IMR-90 (cell line): ENCODE measurements at regions of chr1 and their contacts with region 1.

Region 1: GRCh38 chr1:218345673-218346390 is 696 bp downstream of the TGFB2 start:
- DNase-seq: peak; percentile 70
- ATAC-seq: peak; percentile 56
- H3K4me3 ChIP-seq: peak overlapping the region; percentile 81
- H3K27ac ChIP-seq: peak overlapping the region; percentile 76
- H3K4me1 ChIP-seq: peaks cover 4% of the 10 kb centered on the region
- H3K27me3 ChIP-seq: no peaks in the 10 kb centered on the region
- CTCF ChIP-seq: no peak
- POLR2A ChIP-seq: no peak
- RAD21 ChIP-seq: no peak

Region 2: GRCh38 chr1:218480137-218480536 is 134.3 kb after region 1 on chr1:
- CTCF ChIA-PET with region 1: no interaction called
- POLR2A ChIA-PET with region 1: interaction called, 4 read pairs
- dilution Hi-C with region 1: no loop called
- in situ Hi-C with region 1: no loop called
- intact Hi-C with region 1: loop called (anchors 1 kb)
- DNase-seq: peak; percentile 97
- ATAC-seq: peak; percentile 64
- H3K4me3 ChIP-seq: no peak overlapping the region
- H3K27ac ChIP-seq: peak overlapping the region; percentile 78
- H3K4me1 ChIP-seq: peaks cover 16% of the 10 kb centered on the region
- H3K27me3 ChIP-seq: no peaks in the 10 kb centered on the region
- CTCF ChIP-seq: no peak
- POLR2A ChIP-seq: peak; percentile 45; the same call in 1 of the 2 replicates
- RAD21 ChIP-seq: no peak

Region 3: GRCh38 chr1:218674280-218674773 is 328.5 kb after region 1 on chr1:
- CTCF ChIA-PET with region 1: no interaction called
- POLR2A ChIA-PET with region 1: no interaction called
- dilution Hi-C with region 1: no loop called
- in situ Hi-C with region 1: no loop called
- intact Hi-C with region 1: loop called (anchors 5 kb)
- DNase-seq: peak; percentile 83
- ATAC-seq: peak; percentile 92
- H3K4me3 ChIP-seq: no peak overlapping the region
- H3K27ac ChIP-seq: peak overlapping the region; percentile 65
- H3K4me1 ChIP-seq: peaks cover 4% of the 10 kb centered on the region
- H3K27me3 ChIP-seq: no peaks in the 10 kb centered on the region
- CTCF ChIP-seq: no peak
- POLR2A ChIP-seq: no peak
- RAD21 ChIP-seq: no peak; the same call in 1 of the 2 replicates

Region 4: DNA sequence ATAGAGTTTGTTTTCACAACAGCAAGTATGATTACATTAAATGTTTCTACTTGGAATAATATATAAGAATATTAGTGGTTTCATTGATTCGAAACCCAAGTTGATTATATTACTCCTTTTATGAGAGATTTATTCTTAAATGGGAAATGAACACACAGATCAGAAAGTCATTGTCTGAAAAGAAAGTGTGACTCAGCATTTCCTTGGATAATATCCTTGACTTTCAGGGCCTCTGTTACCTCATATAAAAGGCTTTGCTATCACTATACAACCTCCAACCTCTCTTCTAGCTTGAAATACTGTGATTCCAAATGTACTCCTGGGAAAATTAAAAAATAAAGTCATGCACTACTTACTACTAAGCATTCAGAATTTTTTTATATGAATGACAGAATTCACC is 532.5 kb after region 1 on chr1:
- CTCF ChIA-PET with region 1: no interaction called
- POLR2A ChIA-PET with region 1: no interaction called
- dilution Hi-C with region 1: no loop called
- in situ Hi-C with region 1: no loop called
- intact Hi-C with region 1: loop called (anchors 5 kb)
- DNase-seq: peak; percentile 68
- ATAC-seq: peak; percentile 42
- H3K4me3 ChIP-seq: no peak overlapping the region
- H3K27ac ChIP-seq: no peak overlapping the region
- H3K4me1 ChIP-seq: no peaks in the 10 kb centered on the region; the same call in 1 of the 2 replicates
- H3K27me3 ChIP-seq: no peaks in the 10 kb centered on the region
- CTCF ChIP-seq: no peak
- POLR2A ChIP-seq: no peak
- RAD21 ChIP-seq: no peak

Region 5: DNA sequence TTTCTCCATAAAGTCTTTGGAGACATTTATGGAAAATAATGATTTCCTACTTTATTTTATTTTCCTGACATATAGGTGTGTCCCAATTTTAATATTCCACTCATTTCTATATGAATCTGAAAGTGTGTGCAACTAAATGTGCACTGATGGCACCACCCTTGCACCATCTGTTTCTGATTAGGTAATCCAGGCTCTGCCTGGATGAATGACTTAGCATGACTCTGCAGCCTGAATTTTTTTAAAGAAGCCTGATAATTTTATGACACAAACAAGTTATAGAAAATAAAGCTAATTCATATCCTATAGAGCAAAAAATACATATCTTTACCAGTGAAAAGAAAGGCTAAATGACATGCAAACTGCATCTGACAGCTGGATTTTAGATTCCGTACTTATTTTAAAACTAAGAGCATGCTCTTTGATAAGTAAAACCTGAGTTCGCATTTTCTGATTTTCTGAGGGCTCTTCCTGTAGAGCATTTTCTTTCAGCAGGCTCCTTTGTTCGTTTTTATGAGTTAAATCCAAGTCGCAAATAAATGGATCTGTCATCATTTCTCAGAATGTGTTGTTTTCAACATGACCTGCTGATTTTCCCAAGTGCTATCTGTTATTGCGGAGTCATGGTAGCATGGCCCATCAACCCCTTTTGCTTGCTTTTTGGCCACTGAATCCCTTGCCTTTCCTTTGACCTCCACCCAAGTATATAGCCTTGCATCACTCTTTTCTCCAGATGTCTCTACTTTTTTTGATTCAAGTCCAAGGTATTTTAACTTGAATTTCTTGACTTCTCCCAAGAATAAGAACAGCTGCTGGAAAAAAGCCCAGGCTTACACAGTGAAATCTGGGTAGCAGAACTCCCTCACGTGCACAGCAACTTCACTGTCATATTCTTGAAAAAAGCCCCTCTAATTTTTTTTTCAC is 775.1 kb after region 1 on chr1:
- CTCF ChIA-PET with region 1: no interaction called
- POLR2A ChIA-PET with region 1: no interaction called
- dilution Hi-C with region 1: no loop called
- in situ Hi-C with region 1: no loop called
- intact Hi-C with region 1: no loop called
- DNase-seq: peak; percentile 91
- ATAC-seq: peak; percentile 80
- H3K4me3 ChIP-seq: no peak overlapping the region
- H3K27ac ChIP-seq: peak overlapping the region; percentile 45; the same call in 1 of the 2 replicates
- H3K4me1 ChIP-seq: peaks cover 4% of the 10 kb centered on the region
- H3K27me3 ChIP-seq: no peaks in the 10 kb centered on the region
- CTCF ChIP-seq: no peak
- POLR2A ChIP-seq: no peak
- RAD21 ChIP-seq: no peak

Region 6: DNA sequence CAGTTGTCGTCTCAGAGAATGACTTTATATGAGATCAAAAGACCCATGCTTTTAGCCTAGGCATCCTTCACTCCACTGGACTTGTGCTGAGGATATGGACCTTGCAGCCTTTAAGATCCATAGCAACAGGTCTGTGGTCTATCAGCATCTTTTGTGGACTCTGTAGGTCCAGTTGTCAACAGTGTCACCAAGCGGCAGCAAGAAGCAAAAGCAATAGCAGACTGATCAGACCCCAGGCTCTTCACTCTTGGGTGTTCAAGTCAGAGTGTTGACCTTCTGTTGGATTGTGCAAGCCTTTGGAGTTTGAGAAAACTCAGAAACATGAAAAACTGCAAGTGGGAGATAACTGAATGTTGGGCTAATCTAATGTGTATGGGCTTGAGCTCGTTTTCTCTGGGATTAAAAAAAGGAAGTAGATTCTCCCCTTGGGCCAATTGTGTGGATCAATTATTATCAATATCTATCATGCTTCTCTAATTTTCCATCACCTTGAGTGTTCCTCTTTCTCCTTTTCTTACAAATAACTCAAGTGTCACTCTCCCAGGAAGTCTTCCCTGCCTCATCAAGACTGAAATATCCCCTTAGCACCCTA is 972.0 kb after region 1 on chr1:
- CTCF ChIA-PET with region 1: no interaction called
- POLR2A ChIA-PET with region 1: no interaction called
- dilution Hi-C with region 1: no loop called
- in situ Hi-C with region 1: no loop called
- intact Hi-C with region 1: loop called (anchors 10 kb)
- DNase-seq: no peak
- ATAC-seq: no peak
- H3K4me3 ChIP-seq: no peak overlapping the region
- H3K27ac ChIP-seq: no peak overlapping the region
- H3K4me1 ChIP-seq: no peaks in the 10 kb centered on the region
- H3K27me3 ChIP-seq: peaks cover 5% of the 10 kb centered on the region
- CTCF ChIP-seq: no peak
- POLR2A ChIP-seq: no peak
- RAD21 ChIP-seq: peak; percentile 31; the same call in 1 of the 2 replicates

Region 7: DNA sequence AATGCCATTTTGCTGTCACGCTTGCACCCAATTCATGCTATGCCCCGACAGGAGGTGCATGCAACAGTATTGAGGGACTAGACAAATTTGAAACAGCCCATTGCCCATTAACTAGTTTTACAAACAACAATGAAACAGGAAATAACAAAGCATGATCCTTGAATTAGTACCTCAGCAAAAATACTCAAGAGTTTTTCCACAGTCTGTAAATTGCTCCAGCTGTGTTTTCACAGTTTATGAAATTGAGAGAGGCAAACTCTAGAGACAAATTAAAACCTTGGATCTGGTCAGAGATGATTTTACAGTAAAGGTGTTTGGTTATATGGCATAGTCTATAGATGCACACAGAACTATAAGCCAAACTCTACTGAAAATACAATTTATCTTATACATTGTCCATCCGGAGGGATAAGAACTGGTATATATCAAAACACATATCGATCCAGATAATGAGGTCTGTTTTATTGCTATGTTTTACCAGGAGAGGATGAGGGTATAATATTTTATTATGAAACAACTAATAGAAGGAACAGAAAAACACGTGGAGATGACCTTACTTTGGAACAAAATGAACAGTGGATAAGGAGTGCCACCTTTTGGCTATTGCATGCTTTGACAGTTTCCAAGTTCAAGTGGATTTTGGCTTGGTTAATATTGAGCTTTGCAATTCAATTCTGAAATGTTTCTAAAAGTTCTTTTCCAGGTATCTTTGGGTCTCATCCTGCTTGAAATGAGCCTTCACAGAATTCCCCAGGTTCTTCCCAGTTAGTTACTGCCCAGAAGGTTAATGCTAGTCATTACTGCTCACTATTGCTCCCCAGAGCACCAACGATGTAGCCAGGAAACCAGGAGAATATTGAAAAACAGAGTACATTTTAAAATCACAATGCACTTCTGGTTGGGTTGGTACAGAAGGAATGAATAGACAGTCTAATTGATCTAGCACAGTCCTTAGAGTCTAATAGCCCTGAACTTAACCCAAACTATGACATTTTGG is 1221.4 kb after region 1 on chr1:
- CTCF ChIA-PET with region 1: no interaction called
- POLR2A ChIA-PET with region 1: no interaction called
- dilution Hi-C with region 1: no loop called
- in situ Hi-C with region 1: no loop called
- intact Hi-C with region 1: loop called (anchors 5 kb)
- DNase-seq: peak; percentile 71
- ATAC-seq: peak; percentile 75
- H3K4me3 ChIP-seq: no peak overlapping the region
- H3K27ac ChIP-seq: no peak overlapping the region
- H3K4me1 ChIP-seq: no peaks in the 10 kb centered on the region
- H3K27me3 ChIP-seq: no peaks in the 10 kb centered on the region
- CTCF ChIP-seq: peak; percentile 70
- POLR2A ChIP-seq: no peak
- RAD21 ChIP-seq: peak; percentile 79